ENCODE measurements at regions of chr2 and their contacts with region 1.

Region 1: DNA sequence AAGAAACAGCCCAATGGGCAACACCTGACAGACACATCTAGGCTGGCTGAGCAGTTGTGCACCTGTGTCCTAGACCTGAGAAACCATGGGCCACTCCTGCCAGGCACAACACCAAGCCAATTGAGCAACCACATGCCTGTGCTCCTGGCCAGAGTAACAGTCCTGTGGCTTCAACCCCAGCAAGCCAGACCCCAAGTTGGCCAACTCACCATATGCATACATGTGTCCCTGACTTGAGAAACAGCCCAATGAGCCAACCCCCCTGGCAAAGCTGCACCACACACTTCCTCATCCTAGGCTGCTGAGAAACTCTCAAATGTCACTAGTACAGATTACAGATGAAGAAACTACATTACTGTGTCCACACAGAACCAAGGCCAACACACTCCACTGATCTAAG is 36.6 kb downstream of the USP34 start:
- DNase-seq: no peak
- ATAC-seq: no peak
- H3K4me3 ChIP-seq: no peak overlapping the region
- H3K27ac ChIP-seq: no peak overlapping the region
- H3K4me1 ChIP-seq: peaks cover 5% of the 10 kb centered on the region
- H3K27me3 ChIP-seq: no peaks in the 10 kb centered on the region
- CTCF ChIP-seq: no peak
- POLR2A ChIP-seq: no peak
- RAD21 ChIP-seq: no peak

Region 2: GRCh38 chr2:61470965-61471904 is 36.9 kb after region 1 on chr2 and contains the start of gene USP34:
- CTCF ChIA-PET with region 1: no interaction called
- POLR2A ChIA-PET with region 1: no interaction called
- dilution Hi-C with region 1: no loop called
- in situ Hi-C with region 1: no loop called
- intact Hi-C with region 1: loop called (anchors 5 kb)
- DNase-seq: peak; percentile 95
- ATAC-seq: peak; percentile 90
- H3K4me3 ChIP-seq: peak within 1 kb of the TSS; percentile 95
- H3K27ac ChIP-seq: peak within 1 kb of the TSS; percentile 98
- H3K4me1 ChIP-seq: no peaks in the 10 kb centered on the region
- H3K27me3 ChIP-seq: no peaks in the 10 kb centered on the region
- CTCF ChIP-seq: no peak
- POLR2A ChIP-seq: peak; percentile 97
- RAD21 ChIP-seq: no peak; the same call in 1 of the 2 replicates
- total RNA-seq, gene USP34: 128 and 139 TPM in 2 replicates

Region 3: GRCh38 chr2:61822255-61822654 is 387.9 kb after region 1 on chr2:
- CTCF ChIA-PET with region 1: no interaction called
- POLR2A ChIA-PET with region 1: no interaction called
- dilution Hi-C with region 1: no loop called
- in situ Hi-C with region 1: no loop called
- intact Hi-C with region 1: no loop called
- DNase-seq: no peak
- ATAC-seq: no peak
- H3K4me3 ChIP-seq: no peak overlapping the region
- H3K27ac ChIP-seq: no peak overlapping the region
- H3K4me1 ChIP-seq: no peaks in the 10 kb centered on the region
- H3K27me3 ChIP-seq: no peaks in the 10 kb centered on the region; the same call in 1 of the 2 replicates
- CTCF ChIP-seq: no peak
- POLR2A ChIP-seq: no peak
- RAD21 ChIP-seq: no peak